Vagina (tissue), 2 donors: ENCODE measurements at regions of chr3 and their contacts with region 1.

Region 1: GRCh38 chr3:54303517-54304375 is 181.4 kb downstream of the CACNA2D3 start:
- DNase-seq: no peak
- H3K4me3 ChIP-seq: no peak overlapping the region
- H3K27ac ChIP-seq: no peak overlapping the region
- H3K4me1 ChIP-seq: no peaks in the 10 kb centered on the region
- H3K27me3 ChIP-seq: no peaks in the 10 kb centered on the region
- CTCF ChIP-seq: no peak
- POLR2A ChIP-seq: no peak

Region 2: DNA sequence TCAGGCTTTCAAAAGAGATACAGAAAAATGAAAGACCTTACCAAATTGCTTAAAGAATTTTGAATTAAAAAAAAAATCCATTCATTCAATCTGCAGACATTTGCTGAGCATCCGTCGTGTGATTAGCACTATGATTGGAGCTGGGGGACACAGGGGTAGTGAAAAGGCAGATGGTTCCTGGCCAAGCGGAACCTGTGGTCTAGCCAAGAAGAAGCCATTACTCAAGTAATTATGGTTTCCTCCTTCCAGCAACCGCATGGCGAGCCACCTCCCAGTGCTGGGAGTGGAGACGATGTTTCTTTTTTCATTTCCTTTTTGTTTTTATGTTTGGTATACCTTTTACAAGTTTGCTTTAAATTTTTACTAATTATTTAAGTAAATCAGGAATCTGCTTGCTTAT is 41.2 kb before region 1 on chr3:
- intact Hi-C with region 1: loop called (anchors 2 kb)
- DNase-seq: no peak
- H3K4me3 ChIP-seq: no peak overlapping the region
- H3K27ac ChIP-seq: no peak overlapping the region
- H3K4me1 ChIP-seq: no peaks in the 10 kb centered on the region
- H3K27me3 ChIP-seq: no peaks in the 10 kb centered on the region
- CTCF ChIP-seq: no peak
- POLR2A ChIP-seq: no peak